ENCODE measurements at regions of chr11 and their contacts with region 1.

Region 1: GRCh38 chr11:86608251-86608799 is 64.1 kb downstream of the ME3 start:
- DNase-seq: no peak
- H3K4me3 ChIP-seq: no peak overlapping the region
- CTCF ChIP-seq: peak; percentile 75

Region 2: GRCh38 chr11:86490582-86490981 is 117.7 kb before region 1 on chr11:
- CTCF ChIA-PET with region 1: no interaction called
- POLR2A ChIA-PET with region 1: no interaction called
- DNase-seq: no peak
- H3K4me3 ChIP-seq: no peak overlapping the region
- CTCF ChIP-seq: no peak

Region 3: DNA sequence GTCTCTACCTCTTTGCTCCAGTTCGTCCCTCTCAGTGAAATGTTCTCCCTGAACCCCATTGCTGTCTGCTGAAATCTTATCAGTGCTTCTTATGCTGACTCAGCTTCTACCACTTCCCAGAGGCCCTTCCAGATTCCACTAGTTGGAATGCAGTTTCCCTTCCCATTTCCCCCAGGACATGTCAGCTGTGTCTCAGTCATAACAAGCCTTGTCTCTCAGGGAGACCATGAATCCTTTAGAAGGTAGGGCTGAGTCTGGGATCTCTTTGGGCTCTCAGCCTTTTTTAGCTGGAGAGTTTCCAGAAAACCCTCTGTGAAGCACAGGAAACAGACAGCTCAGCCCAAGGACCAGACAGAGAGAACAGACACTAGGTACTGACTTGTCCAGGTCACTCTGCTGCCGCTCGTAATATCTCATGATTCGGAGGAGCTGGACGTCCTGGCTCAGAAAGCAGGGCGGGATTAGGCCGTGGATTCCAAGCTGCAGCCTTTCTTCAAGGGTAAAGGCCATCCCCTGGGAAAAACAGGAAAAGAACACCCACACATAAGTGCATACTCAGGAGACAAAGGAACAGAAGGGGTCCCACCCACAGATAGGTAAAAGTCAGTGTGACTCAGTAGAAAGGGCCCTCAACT is 48.9 kb before region 1 on chr11:
- CTCF ChIA-PET with region 1: interaction called, 11 read pairs
- POLR2A ChIA-PET with region 1: no interaction called
- DNase-seq: no peak
- H3K4me3 ChIP-seq: no peak overlapping the region
- CTCF ChIP-seq: no peak

Region 4: DNA sequence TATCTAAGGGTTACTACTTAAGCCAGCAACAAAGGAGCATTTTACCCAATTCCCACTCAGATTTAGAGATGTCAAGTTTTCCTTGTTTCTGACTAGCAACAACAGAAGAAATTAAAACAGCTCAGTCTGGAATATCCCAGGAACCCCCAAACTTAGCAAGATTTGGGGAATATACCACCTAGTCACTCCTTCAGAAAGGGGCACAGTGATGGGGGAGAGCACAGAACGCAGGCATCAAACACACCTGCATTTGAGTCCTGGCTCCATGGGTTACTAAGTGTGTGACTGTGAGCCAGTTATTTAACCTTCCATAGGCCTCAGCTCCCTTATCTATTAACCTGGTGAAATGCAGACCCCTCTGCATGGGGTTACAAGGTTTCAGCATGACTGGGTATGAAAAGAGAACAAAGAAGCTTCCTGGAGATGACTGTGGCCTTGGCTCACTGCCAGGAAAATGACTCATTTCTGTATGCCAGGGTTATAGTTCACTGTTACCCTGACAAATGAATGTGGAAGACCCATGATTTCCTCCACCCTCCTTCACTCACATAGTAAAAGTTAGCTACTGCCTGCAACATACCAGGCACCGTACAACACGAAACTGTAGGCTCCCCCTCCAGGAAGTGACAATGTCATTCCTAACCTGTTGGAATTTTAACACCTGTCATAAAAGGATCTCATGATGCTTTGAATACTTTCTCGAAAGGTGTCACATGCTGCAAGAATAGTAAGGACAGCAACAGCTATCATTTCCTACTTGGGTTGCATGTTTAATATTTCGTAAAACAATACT is 15.5 kb before region 1 on chr11:
- CTCF ChIA-PET with region 1: interaction called, 78 read pairs
- POLR2A ChIA-PET with region 1: no interaction called
- DNase-seq: no peak
- H3K4me3 ChIP-seq: no peak overlapping the region
- CTCF ChIP-seq: no peak

Region 5: DNA sequence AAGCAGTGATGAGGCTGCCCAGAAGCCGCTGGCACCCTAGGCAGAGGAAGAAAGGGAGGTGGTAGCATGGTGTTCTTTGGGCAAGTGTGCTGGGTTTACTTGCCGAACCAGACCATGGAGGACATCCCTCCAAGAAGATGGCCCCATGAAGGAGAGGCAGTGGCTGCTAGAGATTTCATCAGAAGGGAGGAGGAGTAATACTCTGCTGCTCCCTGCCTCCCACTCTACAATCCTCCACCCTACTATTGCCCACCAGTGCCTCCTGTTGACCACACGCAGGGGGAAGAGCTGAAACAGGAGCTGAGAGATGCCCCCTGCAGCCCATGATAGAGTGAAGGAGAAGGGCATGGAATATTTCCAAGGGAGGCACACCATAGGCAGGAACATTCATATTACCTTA is 141.1 kb after region 1 on chr11:
- CTCF ChIA-PET with region 1: interaction called, 15 read pairs
- POLR2A ChIA-PET with region 1: interaction called, 7 read pairs
- DNase-seq: no peak
- H3K4me3 ChIP-seq: no peak overlapping the region
- CTCF ChIP-seq: no peak

Region 6: GRCh38 chr11:86784241-86784681 is 175.9 kb after region 1 on chr11:
- CTCF ChIA-PET with region 1: interaction called, 21 read pairs
- POLR2A ChIA-PET with region 1: no interaction called
- DNase-seq: no peak
- H3K4me3 ChIP-seq: no peak overlapping the region
- CTCF ChIP-seq: no peak

Region 7: GRCh38 chr11:86811637-86812321 is 203.5 kb after region 1 on chr11:
- CTCF ChIA-PET with region 1: interaction called, 29 read pairs
- POLR2A ChIA-PET with region 1: no interaction called
- DNase-seq: no peak
- H3K4me3 ChIP-seq: no peak overlapping the region
- CTCF ChIP-seq: no peak

Region 8: GRCh38 chr11:86869966-86870570 is 261.7 kb after region 1 on chr11:
- CTCF ChIA-PET with region 1: interaction called, 15 read pairs
- POLR2A ChIA-PET with region 1: no interaction called
- DNase-seq: no peak
- H3K4me3 ChIP-seq: no peak overlapping the region
- CTCF ChIP-seq: peak; percentile 76

Measured in AG04449 (cell line).